ENCODE measurements at regions of chr3 and their contacts with region 1.

Region 1: GRCh38 chr3:128426128-128426921 is 40.4 kb downstream of the DNAJB8 start:
- DNase-seq: peak; percentile 93

Region 2: DNA sequence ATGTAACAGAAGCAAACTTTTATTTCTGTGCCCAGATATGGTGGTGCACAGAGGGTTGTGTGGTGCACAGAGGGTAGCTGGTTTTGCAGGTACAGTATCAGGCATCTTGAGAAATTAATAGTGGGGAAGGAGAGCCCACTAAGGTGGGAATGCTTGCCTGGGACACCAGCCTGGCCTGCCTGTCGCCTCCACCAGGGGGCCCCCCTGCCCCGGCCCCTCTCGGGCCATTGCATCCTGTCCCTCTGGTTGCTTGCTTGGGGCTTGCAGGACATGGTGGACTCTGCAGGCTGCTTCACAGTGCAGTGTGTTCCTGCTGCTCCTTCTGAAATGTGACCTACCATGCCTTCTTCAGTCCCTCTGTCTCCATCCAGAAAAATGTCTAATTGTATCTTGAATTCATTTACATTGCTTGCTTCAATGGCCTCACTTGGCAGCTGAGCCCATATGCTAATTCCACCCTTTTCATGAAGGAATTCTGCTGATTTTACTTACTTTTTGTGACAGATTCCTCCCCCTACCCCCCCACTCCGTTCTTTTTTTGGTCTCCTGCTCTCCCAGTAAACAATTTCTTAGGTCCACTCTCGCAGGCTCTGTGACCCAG is 199.4 kb before region 1 on chr3:
- CTCF ChIA-PET with region 1: no interaction called
- POLR2A ChIA-PET with region 1: no interaction called
- DNase-seq: peak; percentile 84

Region 3: GRCh38 chr3:128447561-128448013 is 21.3 kb after region 1 on chr3:
- CTCF ChIA-PET with region 1: no interaction called
- POLR2A ChIA-PET with region 1: no interaction called
- DNase-seq: no peak

Region 4: DNA sequence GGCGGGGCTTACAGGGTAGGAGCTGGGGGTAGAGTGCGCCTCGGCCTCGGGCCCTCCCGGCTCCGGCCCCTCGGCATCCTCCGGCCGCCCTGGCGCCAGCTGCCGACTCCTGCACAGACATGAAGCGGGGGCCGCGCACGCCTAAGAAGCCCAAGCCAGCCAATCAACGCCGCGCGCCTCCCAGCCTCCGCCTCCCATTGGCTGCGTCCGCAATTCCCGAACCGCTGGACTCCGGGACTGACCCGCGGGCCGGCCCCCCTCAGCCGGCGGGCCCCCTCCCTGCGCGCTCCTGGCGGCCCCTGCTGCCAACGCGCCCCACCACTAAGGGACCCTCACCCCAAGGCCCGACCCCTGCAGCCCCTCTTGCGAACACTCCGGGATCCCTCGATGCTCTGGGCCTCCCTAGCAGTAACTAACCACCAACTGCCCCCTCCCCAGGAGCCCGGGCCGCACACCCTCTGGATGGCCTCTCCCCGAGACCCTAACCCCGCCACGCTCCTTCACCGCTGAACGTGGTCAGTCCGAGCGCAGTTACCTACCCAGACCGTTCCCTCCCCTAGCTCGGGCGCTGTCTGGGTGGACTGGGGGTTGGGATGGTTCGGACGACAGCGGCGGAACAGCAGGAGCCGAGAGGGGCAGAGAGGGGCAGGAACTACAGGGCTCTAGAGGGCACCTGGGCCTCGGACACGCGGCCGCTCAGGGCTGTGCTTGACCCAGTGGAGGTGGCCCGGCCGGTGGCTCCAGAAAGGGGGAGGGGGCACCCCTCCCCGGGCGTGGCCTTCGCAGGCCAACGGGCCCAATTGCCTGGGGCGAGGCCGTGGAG is 61.7 kb after region 1 on chr3:
- CTCF ChIA-PET with region 1: interaction called, 5 read pairs
- POLR2A ChIA-PET with region 1: interaction called, 15 read pairs
- DNase-seq: peak; percentile 86

Region 5: GRCh38 chr3:128497387-128498126 is 71.2 kb after region 1 on chr3:
- CTCF ChIA-PET with region 1: interaction called, 11 read pairs
- POLR2A ChIA-PET with region 1: interaction called, 3 read pairs
- DNase-seq: peak; percentile 76

Measured in HEK293T (cell line).